Posterior vena cava (tissue), 2 donors: ENCODE measurements at regions of chr12 and their contacts with region 1.

Region 1: DNA sequence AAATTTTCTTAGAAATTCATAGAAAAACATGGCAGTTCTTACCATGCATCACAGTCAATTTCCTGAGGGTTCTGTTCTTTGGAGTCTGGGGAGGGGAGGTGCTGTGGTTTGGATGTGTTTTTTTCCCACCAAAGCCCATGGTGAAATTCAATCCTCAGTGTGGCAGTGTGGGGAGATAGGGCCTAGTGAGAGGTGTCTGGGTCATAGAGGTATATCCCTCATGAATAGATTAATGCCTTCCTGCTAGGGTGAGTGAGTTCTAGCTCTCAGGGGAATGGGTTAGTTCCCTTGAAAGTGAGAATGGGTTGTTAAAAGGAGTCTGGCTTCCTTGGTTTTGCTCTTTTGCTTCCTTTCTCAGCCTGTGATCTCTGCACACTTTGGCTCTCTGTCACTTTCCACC is 277.8 kb downstream of the APAF1 start:
- DNase-seq: no peak

Region 2: DNA sequence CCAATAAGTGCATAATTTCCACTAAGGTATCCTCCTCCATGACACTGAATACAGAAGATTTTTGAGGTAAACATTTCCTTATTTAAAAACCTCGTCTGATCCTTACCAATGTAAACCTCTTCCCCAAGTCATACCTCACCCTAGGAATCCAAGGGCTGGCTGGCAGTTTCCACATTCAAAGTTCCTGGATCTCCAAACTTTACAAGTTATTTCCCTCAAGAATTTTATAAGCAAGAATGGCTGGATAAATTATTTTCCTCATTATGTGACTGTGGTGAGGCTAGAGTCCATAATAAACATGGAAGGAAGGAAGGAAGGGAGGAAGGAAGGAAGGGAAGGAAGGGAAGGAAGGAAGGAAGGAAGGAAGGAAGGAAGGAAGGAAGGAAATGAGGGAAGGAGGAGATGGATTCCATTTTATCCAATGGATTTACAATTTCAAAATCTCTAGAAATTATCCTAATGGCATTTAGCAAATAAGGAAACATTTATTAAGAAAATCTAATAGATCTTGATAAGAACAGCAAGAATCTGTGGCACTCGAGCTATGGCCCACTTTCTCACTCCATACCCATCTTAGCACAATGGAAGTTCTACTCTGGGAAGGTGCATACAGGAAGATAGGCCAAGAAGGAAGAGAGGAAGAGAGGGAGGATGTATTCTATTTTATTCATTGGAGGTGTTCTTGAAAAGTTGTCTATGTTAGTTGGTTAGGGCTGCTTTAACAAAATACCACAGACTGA is 885.3 kb before region 1 on chr12:
- intact Hi-C with region 1: no loop called
- DNase-seq: no peak

Region 3: GRCh38 chr12:98939350-98939749 is 16.5 kb after region 1 on chr12:
- intact Hi-C with region 1: no loop called
- DNase-seq: no peak

Region 4: DNA sequence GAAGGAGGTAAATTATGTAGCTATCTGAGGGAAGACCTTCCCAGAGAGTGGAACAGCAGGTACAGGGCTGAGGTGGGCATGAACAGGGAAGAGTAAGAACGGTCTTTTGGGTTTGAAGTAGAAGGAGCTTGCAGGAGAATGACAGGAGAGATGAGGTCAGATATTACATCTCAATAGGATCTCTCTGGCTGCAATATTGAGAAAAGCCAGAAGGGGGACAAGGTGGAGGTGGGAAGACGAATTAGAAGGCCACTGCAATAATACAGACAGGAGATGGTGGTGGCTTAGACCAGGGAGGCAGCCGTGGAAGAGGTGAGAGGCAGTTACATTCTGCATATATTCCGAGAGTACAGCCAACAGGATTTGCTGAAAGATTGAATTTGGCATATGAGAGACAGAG is 32.4 kb after region 1 on chr12:
- intact Hi-C with region 1: no loop called
- DNase-seq: no peak

Region 5: DNA sequence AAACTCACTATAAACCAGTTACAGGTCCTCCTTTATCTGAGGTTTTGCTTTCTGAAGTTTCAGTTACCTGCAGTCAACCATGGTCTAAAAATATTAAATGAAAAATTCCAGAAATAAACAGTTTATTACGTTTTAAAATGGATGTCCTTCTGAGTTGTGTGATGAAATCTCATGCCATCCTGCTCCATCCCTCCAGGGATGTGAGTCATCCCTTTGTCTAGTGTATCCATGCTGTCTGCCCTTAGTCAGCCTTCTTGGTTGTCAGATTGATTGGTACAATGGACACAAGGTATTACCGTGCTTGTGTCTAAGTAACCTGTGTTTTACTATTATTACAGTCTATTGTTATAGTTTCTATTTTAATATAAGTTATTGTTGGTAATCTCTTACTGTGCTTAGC is 50.5 kb after region 1 on chr12:
- intact Hi-C with region 1: loop called in 1 of 2 experiments (anchors 1 kb)
- DNase-seq: no peak

Region 6: DNA sequence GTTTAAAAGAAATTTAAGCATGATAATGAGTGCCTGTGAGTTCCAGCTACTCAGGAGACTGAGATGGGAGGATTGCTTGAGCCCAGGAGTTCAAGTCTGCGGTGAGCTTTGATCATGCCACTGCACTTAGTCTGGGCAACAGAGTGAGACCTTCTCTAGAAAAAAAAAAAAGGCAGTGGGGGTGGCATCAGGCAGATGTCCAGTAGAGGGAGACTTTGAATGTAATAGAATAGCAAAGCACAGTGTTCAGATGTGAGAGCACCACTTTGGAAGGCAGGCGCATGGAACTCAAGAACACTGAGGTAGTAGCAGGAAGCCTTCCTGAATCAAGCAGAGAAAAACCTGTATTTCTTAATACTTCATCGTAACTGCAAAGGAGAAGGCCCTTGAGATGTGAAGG is 330.2 kb after region 1 on chr12:
- intact Hi-C with region 1: no loop called
- DNase-seq: no peak